Naive thymus-derived CD4-positive, alpha-beta T cell (primary cell): ENCODE measurements at regions of chr16 and their contacts with region 1.

Region 1: DNA sequence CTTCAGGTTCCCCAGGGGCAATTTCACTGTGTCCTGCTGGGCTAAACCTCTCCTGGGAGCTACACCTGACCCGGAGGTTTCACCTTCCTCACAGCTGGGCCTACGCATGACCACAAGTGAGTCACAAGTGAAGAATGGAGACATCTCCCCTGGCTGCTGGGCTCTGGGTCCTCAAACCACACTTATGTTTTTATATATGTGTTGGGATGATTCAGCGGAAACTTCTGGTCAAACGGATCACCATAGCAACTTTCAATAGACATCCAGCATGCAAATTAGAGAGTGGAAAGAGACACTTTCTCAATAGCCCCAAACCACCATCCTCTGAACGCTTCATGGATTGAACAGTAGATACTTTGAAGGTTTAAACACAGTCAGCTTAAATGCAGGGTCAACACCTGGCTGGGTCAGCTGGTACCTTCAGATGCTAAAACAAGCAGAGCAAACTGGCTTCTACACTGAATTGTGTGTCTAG is 28.0 kb upstream of the MAF start:
- DNase-seq: peak in 1 of 9 donors; percentile 79
- ATAC-seq: peak; percentile 47
- H3K4me3 ChIP-seq: no peak overlapping the region
- H3K4me3 Mint-ChIP-seq: peak overlapping the region in 1 of 10 donors; percentile 73
- H3K27ac ChIP-seq: no peak overlapping the region
- H3K27ac Mint-ChIP-seq: peak overlapping the region in 1 of 9 donors; percentile 78
- H3K4me1 ChIP-seq: peaks cover 0 to 6% of the 10 kb centered on the region in 2 donors
- H3K4me1 Mint-ChIP-seq: peaks cover 0 to 61% (median 0%) of the 10 kb centered on the region in 7 donors
- H3K27me3 ChIP-seq: no peaks in the 10 kb centered on the region
- H3K27me3 Mint-ChIP-seq: peaks cover 5 to 14% (median 10%) of the 10 kb centered on the region in 5 donors

Region 2: DNA sequence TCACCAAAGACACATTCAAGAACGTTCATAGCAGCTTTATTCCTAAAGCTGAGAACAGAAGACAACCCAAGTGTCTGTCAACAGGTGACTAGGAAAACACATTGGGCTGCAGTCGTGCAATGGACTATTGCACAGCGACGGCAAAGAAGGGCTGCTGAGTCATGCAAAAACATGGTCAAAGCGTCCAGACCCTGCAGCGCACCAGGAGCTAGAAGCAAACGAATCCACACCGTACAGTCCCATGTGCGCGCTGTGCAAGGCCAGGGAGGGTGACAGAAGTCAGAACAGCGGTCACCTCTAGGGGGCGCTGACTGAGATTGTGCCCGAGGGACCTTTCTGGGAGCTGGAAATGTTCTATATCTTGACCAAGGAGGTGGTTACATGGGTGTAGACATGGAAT is 294.4 kb before region 1 on chr16:
- CTCF ChIA-PET with region 1: no interaction called
- POLR2A ChIA-PET with region 1: no interaction called
- intact Hi-C with region 1: no loop called
- DNase-seq: peak in 2 of 9 donors; percentile 2 to 7
- ATAC-seq: no peak
- H3K4me3 ChIP-seq: no peak overlapping the region
- H3K4me3 Mint-ChIP-seq: no peak overlapping the region
- H3K27ac ChIP-seq: no peak overlapping the region
- H3K27ac Mint-ChIP-seq: no peak overlapping the region
- H3K4me1 ChIP-seq: no peaks in the 10 kb centered on the region
- H3K4me1 Mint-ChIP-seq: peaks cover 0 to 2% (median 0%) of the 10 kb centered on the region in 7 donors
- H3K27me3 ChIP-seq: no peaks in the 10 kb centered on the region
- H3K27me3 Mint-ChIP-seq: peaks cover 2 to 17% (median 11%) of the 10 kb centered on the region in 5 donors

Region 3: DNA sequence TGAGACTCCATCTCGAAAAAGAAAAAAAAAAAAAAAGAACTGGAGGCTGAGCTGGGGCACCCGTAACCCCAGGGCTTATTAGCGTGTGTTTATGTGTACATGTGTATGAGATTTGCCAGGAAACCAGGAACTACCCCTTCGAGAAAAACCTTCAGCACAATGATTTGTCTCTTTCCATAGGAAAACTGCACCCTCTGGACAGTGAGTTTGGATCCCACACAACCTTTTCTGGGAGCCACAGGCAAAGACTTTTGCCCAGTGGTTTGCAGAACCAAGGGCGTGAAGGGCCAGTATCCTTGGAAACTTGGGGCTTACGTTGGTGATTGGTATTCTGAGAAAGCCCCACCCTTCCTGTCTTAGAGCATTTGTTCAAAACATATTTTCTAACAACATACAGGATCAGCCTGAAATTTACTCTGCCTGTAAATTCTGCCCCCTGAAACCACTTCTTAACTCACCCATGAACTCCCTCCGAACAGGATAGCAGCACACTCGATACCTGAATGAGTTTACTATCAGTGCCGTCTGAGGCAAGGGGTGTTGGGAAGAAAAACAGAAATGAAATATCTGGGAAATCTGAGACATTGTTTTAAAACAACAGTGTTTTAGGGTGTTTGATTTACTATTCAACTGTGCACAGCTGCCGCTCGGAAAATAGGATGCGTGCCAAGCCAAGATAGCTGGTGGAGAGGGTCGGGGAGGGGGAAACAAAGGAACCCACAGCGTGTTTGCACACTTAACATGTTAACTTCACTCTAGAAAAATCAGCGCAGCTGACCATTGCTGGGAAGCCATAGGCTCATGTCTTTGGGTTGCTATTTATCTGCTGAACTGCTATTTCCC is 12.2 kb after region 1 on chr16:
- CTCF ChIA-PET with region 1: no interaction called
- POLR2A ChIA-PET with region 1: no interaction called
- intact Hi-C with region 1: loop called in 1 of 2 experiments (anchors 1 kb)
- DNase-seq: peak in 4 of 9 donors; percentile 1 to 35 (median 28)
- ATAC-seq: peak; percentile 34
- H3K4me3 ChIP-seq: no peak overlapping the region
- H3K4me3 Mint-ChIP-seq: peak overlapping the region; percentile 8 to 77 (median 60)
- H3K27ac ChIP-seq: no peak overlapping the region
- H3K27ac Mint-ChIP-seq: peak overlapping the region; percentile 7 to 95 (median 57)
- H3K4me1 ChIP-seq: peaks cover 3 to 5% of the 10 kb centered on the region in 2 donors
- H3K4me1 Mint-ChIP-seq: peaks cover 9 to 45% (median 28%) of the 10 kb centered on the region in 7 donors
- H3K27me3 ChIP-seq: no peaks in the 10 kb centered on the region
- H3K27me3 Mint-ChIP-seq: peaks cover 0 to 7% (median 3%) of the 10 kb centered on the region in 5 donors

Region 4: DNA sequence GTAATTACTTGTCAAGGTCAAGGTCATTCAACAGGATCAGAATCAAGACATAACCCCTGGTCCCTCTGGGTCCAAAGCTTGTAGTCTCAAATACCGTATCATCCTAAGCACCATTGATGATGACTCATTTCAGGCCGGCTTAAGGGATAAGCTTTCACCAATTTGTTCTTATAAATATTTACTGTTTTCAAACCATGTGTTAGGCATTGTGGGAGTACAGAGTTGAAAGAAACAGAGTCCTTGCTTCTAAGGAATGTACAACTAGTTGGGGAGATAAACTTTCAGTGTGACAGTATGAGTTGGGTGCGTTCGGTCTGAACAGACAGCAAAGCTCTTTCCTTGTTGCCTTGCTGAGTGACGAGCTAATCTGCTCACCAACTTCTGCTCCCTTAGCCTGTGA is 155.5 kb after region 1 on chr16:
- CTCF ChIA-PET with region 1: no interaction called
- POLR2A ChIA-PET with region 1: no interaction called
- intact Hi-C with region 1: no loop called
- DNase-seq: no peak
- ATAC-seq: no peak
- H3K4me3 ChIP-seq: no peak overlapping the region
- H3K4me3 Mint-ChIP-seq: no peak overlapping the region
- H3K27ac ChIP-seq: no peak overlapping the region
- H3K27ac Mint-ChIP-seq: no peak overlapping the region
- H3K4me1 ChIP-seq: no peaks in the 10 kb centered on the region
- H3K4me1 Mint-ChIP-seq: no peaks in the 10 kb centered on the region
- H3K27me3 ChIP-seq: no peaks in the 10 kb centered on the region
- H3K27me3 Mint-ChIP-seq: peaks cover 0 to 17% (median 13%) of the 10 kb centered on the region in 5 donors

Region 5: DNA sequence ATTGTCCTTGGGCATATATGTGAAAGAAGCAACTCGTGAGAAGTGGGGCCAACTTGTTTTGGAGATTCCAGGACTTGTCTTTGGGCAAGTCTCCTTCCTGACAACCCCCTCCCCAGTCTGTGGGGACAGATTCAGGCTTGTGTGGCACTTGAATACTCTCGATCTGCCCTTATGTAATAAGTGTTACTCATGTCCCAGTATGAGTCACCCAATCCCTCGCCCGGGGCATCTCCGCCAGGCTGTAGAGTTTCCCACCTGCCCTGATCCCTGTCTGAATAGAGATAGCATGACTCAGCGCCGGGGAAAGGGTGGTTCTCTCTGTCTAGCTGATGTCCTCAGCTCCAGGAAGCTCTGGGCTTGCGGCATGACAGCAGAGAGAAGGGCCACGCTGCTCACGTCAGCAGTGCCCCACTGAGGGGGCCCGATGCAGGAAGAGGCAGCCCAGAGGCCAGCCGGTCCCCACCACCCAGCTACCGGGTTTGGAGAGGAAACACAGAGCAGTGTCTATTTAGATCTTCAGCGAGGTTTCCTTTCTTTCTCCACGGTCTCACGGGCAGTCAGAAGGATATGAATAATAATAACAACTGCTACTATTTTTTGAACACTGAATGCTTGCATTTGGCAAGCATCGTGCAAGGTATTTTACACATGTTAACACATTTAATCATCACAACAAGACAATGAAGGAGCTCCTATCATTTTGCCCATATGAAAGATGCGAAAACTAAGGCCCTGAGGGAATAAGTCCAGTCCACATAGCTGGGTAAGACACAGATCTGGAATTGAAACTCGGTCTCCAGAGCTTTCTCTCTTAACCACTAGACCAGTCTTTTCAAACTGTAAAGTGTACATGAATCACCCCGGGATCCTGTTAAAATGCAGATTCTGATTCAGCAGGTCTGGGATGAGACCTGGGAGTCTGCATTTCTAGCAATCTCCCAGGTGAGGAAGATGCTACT is 398.7 kb after region 1 on chr16:
- CTCF ChIA-PET with region 1: no interaction called
- POLR2A ChIA-PET with region 1: no interaction called
- intact Hi-C with region 1: no loop called
- DNase-seq: peak in 3 of 9 donors; percentile 1 to 35 (median 10)
- ATAC-seq: peak; percentile 76
- H3K4me3 ChIP-seq: no peak overlapping the region
- H3K4me3 Mint-ChIP-seq: peak overlapping the region in 4 of 10 donors; percentile 36 to 48 (median 40)
- H3K27ac ChIP-seq: no peak overlapping the region
- H3K27ac Mint-ChIP-seq: peak overlapping the region in 1 of 9 donors; percentile 36
- H3K4me1 ChIP-seq: no peaks in the 10 kb centered on the region
- H3K4me1 Mint-ChIP-seq: peaks cover 0 to 11% (median 9%) of the 10 kb centered on the region in 7 donors
- H3K27me3 ChIP-seq: no peaks in the 10 kb centered on the region
- H3K27me3 Mint-ChIP-seq: peaks cover 0 to 15% (median 5%) of the 10 kb centered on the region in 5 donors